Activated CD8-positive, alpha-beta T cell treated with anti-CD3 and anti-CD28 coated beads for 36 hours (primary cell): ENCODE measurements at regions of chr17 and their contacts with region 1.

Region 1: GRCh38 chr17:74368092-74369081 is 1.1 kb downstream of the GPR142 start:
- DNase-seq: peak; percentile 82
- ATAC-seq: peak; percentile 78
- H3K4me3 Mint-ChIP-seq: peak overlapping the region; percentile 7
- H3K27ac Mint-ChIP-seq: no peak overlapping the region
- H3K4me1 Mint-ChIP-seq: peaks cover 15% of the 10 kb centered on the region
- H3K27me3 Mint-ChIP-seq: no peaks in the 10 kb centered on the region
- CTCF ChIP-seq: peak; percentile 97

Region 2: GRCh38 chr17:74280093-74280513 is 88.3 kb before region 1 on chr17:
- CTCF ChIA-PET with region 1: interaction called, 13 read pairs
- POLR2A ChIA-PET with region 1: no interaction called
- intact Hi-C with region 1: no loop called
- DNase-seq: peak; percentile 82
- ATAC-seq: peak; percentile 71
- H3K4me3 Mint-ChIP-seq: no peak overlapping the region
- H3K27ac Mint-ChIP-seq: peak overlapping the region; percentile 85
- H3K4me1 Mint-ChIP-seq: peaks cover 34% of the 10 kb centered on the region
- H3K27me3 Mint-ChIP-seq: no peaks in the 10 kb centered on the region
- CTCF ChIP-seq: no peak

Region 3: DNA sequence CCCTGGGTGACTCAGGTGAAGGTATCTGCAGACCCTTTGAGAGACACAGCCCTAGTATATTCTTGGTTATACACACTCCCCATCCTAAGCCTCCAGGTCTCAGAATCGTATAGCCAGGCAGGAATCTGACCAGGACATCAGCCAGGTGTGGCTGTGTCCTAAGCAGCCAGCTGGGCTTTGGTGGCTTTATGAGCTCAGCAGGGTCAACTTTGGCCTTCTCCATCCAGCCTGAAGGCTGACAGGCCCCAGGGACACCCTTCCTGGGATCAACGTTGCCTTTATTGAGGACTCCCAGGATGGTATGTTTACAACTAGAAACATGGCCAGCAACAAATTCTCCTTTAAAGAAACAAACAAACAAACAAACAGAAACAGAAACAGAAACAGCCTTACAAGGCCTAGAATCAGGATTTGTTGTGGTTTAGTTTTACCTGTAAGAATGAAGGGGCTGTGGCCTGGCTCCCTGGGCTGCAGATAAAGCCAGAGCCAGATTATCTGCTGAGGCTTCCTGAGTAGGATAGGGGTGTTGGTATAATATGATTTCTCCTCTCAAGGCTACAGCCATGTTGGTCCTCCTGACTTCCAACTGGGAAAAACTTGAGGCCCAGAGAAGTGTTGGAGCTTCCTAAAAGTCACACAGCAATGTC is 33.9 kb before region 1 on chr17:
- CTCF ChIA-PET with region 1: interaction called, 10 read pairs
- POLR2A ChIA-PET with region 1: no interaction called
- intact Hi-C with region 1: no loop called
- DNase-seq: no peak
- ATAC-seq: no peak
- H3K4me3 Mint-ChIP-seq: no peak overlapping the region
- H3K27ac Mint-ChIP-seq: no peak overlapping the region
- H3K4me1 Mint-ChIP-seq: no peaks in the 10 kb centered on the region
- H3K27me3 Mint-ChIP-seq: no peaks in the 10 kb centered on the region
- CTCF ChIP-seq: no peak

Region 4: GRCh38 chr17:74387365-74388218 is 19.2 kb after region 1 on chr17:
- CTCF ChIA-PET with region 1: interaction called, 104 read pairs
- POLR2A ChIA-PET with region 1: no interaction called
- intact Hi-C with region 1: no loop called
- DNase-seq: no peak
- ATAC-seq: no peak
- H3K4me3 Mint-ChIP-seq: no peak overlapping the region
- H3K27ac Mint-ChIP-seq: no peak overlapping the region
- H3K4me1 Mint-ChIP-seq: no peaks in the 10 kb centered on the region
- H3K27me3 Mint-ChIP-seq: no peaks in the 10 kb centered on the region
- CTCF ChIP-seq: no peak

Region 5: GRCh38 chr17:74457146-74457819 is 88.9 kb after region 1 on chr17:
- CTCF ChIA-PET with region 1: interaction called, 125 read pairs
- POLR2A ChIA-PET with region 1: no interaction called
- intact Hi-C with region 1: no loop called
- DNase-seq: peak; percentile 88
- ATAC-seq: peak; percentile 51
- H3K4me3 Mint-ChIP-seq: no peak overlapping the region
- H3K27ac Mint-ChIP-seq: no peak overlapping the region
- H3K4me1 Mint-ChIP-seq: peaks cover 12% of the 10 kb centered on the region
- H3K27me3 Mint-ChIP-seq: peaks cover 1% of the 10 kb centered on the region
- CTCF ChIP-seq: peak; percentile 90

Region 6: GRCh38 chr17:74532115-74532514 is 163.7 kb after region 1 on chr17:
- CTCF ChIA-PET with region 1: interaction called, 17 read pairs
- POLR2A ChIA-PET with region 1: no interaction called
- intact Hi-C with region 1: loop called (anchors 10 kb)
- DNase-seq: peak; percentile 9
- ATAC-seq: peak; percentile 47
- H3K4me3 Mint-ChIP-seq: no peak overlapping the region
- H3K27ac Mint-ChIP-seq: no peak overlapping the region
- H3K4me1 Mint-ChIP-seq: peaks cover 7% of the 10 kb centered on the region
- H3K27me3 Mint-ChIP-seq: peaks cover 32% of the 10 kb centered on the region
- CTCF ChIP-seq: no peak